CD4-positive, alpha-beta memory T cell (primary cell): ENCODE measurements at regions of chr10 and their contacts with region 1.

Region 1: DNA sequence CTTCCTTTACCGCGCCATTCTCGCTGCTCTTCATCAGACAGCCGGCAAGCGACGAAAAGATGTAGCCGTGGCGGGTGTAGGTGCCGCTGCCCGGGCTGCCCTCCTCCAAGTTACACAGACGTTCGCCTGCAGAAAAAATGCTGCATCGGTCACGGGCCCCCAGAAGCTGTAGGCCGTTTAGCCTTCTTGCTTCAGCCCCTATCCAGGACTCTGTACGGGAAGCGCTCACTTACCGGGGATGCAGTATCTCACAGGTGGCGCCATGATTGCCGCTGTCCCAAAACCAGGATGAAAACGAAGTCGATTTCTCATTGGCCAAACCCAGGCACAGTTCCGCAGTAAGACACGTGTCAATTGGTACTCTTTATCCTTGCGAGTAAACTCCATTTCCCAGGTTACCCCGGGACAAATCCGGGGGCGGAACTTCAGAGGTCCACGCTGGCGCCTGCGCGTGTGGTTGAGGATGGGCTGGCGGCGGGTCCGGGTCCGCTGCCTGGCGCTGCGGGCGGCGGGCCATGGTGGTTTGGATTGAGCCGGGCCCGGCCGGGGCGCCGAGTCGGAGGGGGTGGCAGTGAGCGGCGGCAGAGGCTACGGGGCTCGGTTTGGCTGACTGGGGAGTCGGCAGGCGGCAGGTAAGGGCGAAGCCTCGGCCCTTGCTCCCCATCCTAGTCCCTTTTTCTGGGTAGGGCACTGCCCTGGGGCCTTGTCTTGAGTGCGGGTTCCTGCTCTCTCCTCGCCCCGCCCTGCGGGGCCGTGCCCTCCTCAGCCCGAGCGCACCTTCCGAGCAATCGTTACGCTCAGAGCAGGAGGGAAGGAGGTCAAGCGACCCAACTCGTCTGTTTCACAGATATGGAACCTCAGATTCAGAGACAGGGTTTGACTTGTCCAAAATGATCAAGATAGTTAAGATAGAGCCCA is at the starts of genes EXOSC1 and ZDHHC16:
- DNase-seq: peak; percentile 88 to 95 (median 89)
- H3K4me3 ChIP-seq: peak within 1 kb of the TSS; percentile 79 to 93
- H3K4me3 Mint-ChIP-seq: peak within 1 kb of the TSS; percentile 97 to 100 (median 99)
- H3K27ac ChIP-seq: peak within 1 kb of the TSS; percentile 80
- H3K27ac Mint-ChIP-seq: peak within 1 kb of the TSS; percentile 86 to 97 (median 95)
- H3K4me1 ChIP-seq: peaks cover 40% of the 10 kb centered on the region
- H3K4me1 Mint-ChIP-seq: peaks cover 23 to 59% (median 48%) of the 10 kb centered on the region in 4 donors
- H3K27me3 ChIP-seq: no peaks in the 10 kb centered on the region
- H3K27me3 Mint-ChIP-seq: no peaks in the 10 kb centered on the region
- total RNA-seq, gene EXOSC1: 60.6 to 62.7 TPM
- total RNA-seq, gene ZDHHC16: 29.6 to 29.7 TPM

Region 2: GRCh38 chr10:96949039-96949683 is 496.8 kb before region 1 on chr10:
- CTCF ChIA-PET with region 1: no interaction called
- POLR2A ChIA-PET with region 1: no interaction called
- intact Hi-C with region 1: no loop called
- DNase-seq: no peak
- H3K4me3 ChIP-seq: no peak overlapping the region
- H3K4me3 Mint-ChIP-seq: peak overlapping the region in 1 of 8 donors; percentile 2
- H3K27ac ChIP-seq: no peak overlapping the region
- H3K27ac Mint-ChIP-seq: peak overlapping the region in 1 of 7 donors; percentile 14
- H3K4me1 ChIP-seq: no peaks in the 10 kb centered on the region
- H3K4me1 Mint-ChIP-seq: peaks cover 9 to 18% (median 15%) of the 10 kb centered on the region in 4 donors
- H3K27me3 ChIP-seq: no peaks in the 10 kb centered on the region
- H3K27me3 Mint-ChIP-seq: no peaks in the 10 kb centered on the region

Region 3: GRCh38 chr10:97292097-97292862 is 153.7 kb before region 1 on chr10 and contains the start of gene ARHGAP19:
- CTCF ChIA-PET with region 1: no interaction called
- POLR2A ChIA-PET with region 1: no interaction called
- intact Hi-C with region 1: loop called (anchors 1 kb)
- DNase-seq: peak; percentile 94 to 98 (median 95)
- H3K4me3 ChIP-seq: peak within 1 kb of the TSS; percentile 76 to 85
- H3K4me3 Mint-ChIP-seq: peak within 1 kb of the TSS; percentile 90 to 99 (median 94)
- H3K27ac ChIP-seq: peak within 1 kb of the TSS; percentile 78
- H3K27ac Mint-ChIP-seq: peak within 1 kb of the TSS; percentile 85 to 97 (median 95)
- H3K4me1 ChIP-seq: peaks cover 11% of the 10 kb centered on the region
- H3K4me1 Mint-ChIP-seq: peaks cover 8 to 25% (median 20%) of the 10 kb centered on the region in 4 donors
- H3K27me3 ChIP-seq: no peaks in the 10 kb centered on the region
- H3K27me3 Mint-ChIP-seq: peaks cover 1 to 3% of the 10 kb centered on the region in 2 donors
- total RNA-seq, gene ARHGAP19: 17.0 to 19.3 TPM

Region 4: DNA sequence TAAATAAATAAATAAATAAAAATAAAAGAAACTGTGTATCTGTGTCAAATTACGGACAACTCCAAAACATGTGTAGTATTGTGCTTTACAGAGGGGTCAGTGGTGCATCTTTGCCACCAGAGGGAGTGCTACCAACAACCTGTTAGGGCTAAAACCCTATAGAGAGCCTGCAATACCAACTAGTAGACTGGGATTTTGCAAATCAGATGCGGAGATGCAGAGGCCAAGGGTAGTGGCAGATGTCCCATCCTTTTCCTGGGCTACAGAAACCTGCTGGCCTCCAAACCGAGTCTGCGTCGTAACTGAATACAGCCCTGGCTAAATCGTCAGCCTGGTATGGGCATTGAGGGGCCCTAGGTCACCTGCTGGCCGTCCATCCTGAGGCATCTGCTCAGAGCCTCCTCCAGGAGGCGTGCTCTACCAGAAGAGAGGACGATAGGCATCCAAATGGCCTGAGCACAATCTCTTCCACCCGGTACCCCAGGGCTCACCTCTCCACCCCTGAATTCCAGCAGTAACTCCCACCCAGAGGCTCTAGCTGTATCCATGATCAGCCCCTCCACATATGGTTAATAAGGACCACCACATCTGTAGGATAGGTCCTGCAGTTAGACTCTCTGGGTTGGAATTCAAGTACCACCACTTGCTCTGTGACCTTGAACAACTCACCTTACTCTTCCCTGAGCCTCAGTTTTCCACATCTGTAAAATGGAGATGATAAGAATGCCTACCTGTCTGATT is 38.6 kb before region 1 on chr10:
- CTCF ChIA-PET with region 1: interaction called, 5 read pairs
- POLR2A ChIA-PET with region 1: interaction called, 3 read pairs
- intact Hi-C with region 1: loop called (anchors 1 kb)
- DNase-seq: peak; percentile 74 to 78 (median 77)
- H3K4me3 ChIP-seq: peak overlapping the region; percentile 35 to 48
- H3K4me3 Mint-ChIP-seq: peak overlapping the region in 7 of 8 donors; percentile 36 to 77 (median 74)
- H3K27ac ChIP-seq: no peak overlapping the region
- H3K27ac Mint-ChIP-seq: peak overlapping the region; percentile 54 to 88 (median 78)
- H3K4me1 ChIP-seq: peaks cover 6% of the 10 kb centered on the region
- H3K4me1 Mint-ChIP-seq: peaks cover 3 to 12% (median 9%) of the 10 kb centered on the region in 4 donors
- H3K27me3 ChIP-seq: no peaks in the 10 kb centered on the region
- H3K27me3 Mint-ChIP-seq: no peaks in the 10 kb centered on the region

Region 5: GRCh38 chr10:97412891-97413304 is 33.1 kb before region 1 on chr10:
- CTCF ChIA-PET with region 1: interaction called, 15 read pairs
- POLR2A ChIA-PET with region 1: interaction called, 4 read pairs
- intact Hi-C with region 1: no loop called
- DNase-seq: no peak
- H3K4me3 ChIP-seq: no peak overlapping the region
- H3K4me3 Mint-ChIP-seq: peak overlapping the region in 4 of 8 donors; percentile 2 to 60 (median 23)
- H3K27ac ChIP-seq: no peak overlapping the region
- H3K27ac Mint-ChIP-seq: peak overlapping the region; percentile 34 to 91 (median 79)
- H3K4me1 ChIP-seq: peaks cover 38% of the 10 kb centered on the region
- H3K4me1 Mint-ChIP-seq: peaks cover 20 to 43% (median 31%) of the 10 kb centered on the region in 4 donors
- H3K27me3 ChIP-seq: no peaks in the 10 kb centered on the region
- H3K27me3 Mint-ChIP-seq: no peaks in the 10 kb centered on the region

Region 6: GRCh38 chr10:97632949-97633884 is 187.2 kb after region 1 on chr10 and contains the start of gene MORN4:
- CTCF ChIA-PET with region 1: no interaction called
- POLR2A ChIA-PET with region 1: no interaction called
- intact Hi-C with region 1: loop called (anchors 1 kb)
- DNase-seq: peak; percentile 91 to 92 (median 91)
- H3K4me3 ChIP-seq: peak within 1 kb of the TSS; percentile 53 to 55
- H3K4me3 Mint-ChIP-seq: peak within 1 kb of the TSS; percentile 92 to 99 (median 97)
- H3K27ac ChIP-seq: peak within 1 kb of the TSS; percentile 36
- H3K27ac Mint-ChIP-seq: peak within 1 kb of the TSS; percentile 83 to 97 (median 91)
- H3K4me1 ChIP-seq: peaks cover 10% of the 10 kb centered on the region
- H3K4me1 Mint-ChIP-seq: peaks cover 7 to 19% (median 14%) of the 10 kb centered on the region in 4 donors
- H3K27me3 ChIP-seq: no peaks in the 10 kb centered on the region
- H3K27me3 Mint-ChIP-seq: no peaks in the 10 kb centered on the region
- total RNA-seq, gene MORN4: 2.1 to 3.0 TPM